ENCODE measurements at regions of chr20 and their contacts with region 1.

Region 1: DNA sequence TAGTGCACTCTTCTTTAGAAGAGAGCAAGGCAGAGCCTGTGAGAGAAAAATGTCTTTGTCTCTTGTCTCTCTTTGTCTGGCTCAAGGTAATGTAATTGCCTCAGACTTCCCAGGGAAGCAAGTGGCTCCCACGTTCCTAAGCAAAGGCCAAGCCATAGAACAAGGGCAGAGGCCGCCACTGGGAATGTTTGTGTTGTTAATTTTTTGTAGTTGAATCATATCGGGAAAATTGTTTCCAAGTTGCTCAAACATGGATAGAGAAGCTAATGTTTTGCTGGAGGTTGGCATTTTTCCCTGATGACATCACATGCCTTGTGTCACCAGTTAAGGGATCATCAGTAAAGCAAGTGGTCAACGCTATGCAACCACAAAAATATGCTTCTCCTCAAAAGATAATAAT is 211.5 kb upstream of the FOXA2 start:
- DNase-seq: no peak
- H3K4me3 Mint-ChIP-seq: no peak overlapping the region
- H3K27ac Mint-ChIP-seq: no peak overlapping the region
- H3K4me1 Mint-ChIP-seq: no peaks in the 10 kb centered on the region
- H3K27me3 Mint-ChIP-seq: no peaks in the 10 kb centered on the region

Region 2: GRCh38 chr20:20969701-20970280 is 1826.1 kb before region 1 on chr20:
- intact Hi-C with region 1: loop called (anchors 10 kb)
- DNase-seq: no peak
- H3K4me3 Mint-ChIP-seq: no peak overlapping the region
- H3K27ac Mint-ChIP-seq: no peak overlapping the region
- H3K4me1 Mint-ChIP-seq: no peaks in the 10 kb centered on the region
- H3K27me3 Mint-ChIP-seq: no peaks in the 10 kb centered on the region

Measured in activated T-helper 1 cell treated with anti-CD3 and anti-CD28 coated beads, Interleukin-12 subunit alpha, Interleukin-12 subunit beta, Interleukin-2, Interleukin-4 antibody, amounts not matched to agents 30 ng/mL and 10 ng/mL and 1 ng/mL, durations not matched to agents 14 hours and 24 hours and 36 hours (primary cell).